Caki2 (cell line): ENCODE measurements at regions of chr6 and their contacts with region 1.

Region 1: DNA sequence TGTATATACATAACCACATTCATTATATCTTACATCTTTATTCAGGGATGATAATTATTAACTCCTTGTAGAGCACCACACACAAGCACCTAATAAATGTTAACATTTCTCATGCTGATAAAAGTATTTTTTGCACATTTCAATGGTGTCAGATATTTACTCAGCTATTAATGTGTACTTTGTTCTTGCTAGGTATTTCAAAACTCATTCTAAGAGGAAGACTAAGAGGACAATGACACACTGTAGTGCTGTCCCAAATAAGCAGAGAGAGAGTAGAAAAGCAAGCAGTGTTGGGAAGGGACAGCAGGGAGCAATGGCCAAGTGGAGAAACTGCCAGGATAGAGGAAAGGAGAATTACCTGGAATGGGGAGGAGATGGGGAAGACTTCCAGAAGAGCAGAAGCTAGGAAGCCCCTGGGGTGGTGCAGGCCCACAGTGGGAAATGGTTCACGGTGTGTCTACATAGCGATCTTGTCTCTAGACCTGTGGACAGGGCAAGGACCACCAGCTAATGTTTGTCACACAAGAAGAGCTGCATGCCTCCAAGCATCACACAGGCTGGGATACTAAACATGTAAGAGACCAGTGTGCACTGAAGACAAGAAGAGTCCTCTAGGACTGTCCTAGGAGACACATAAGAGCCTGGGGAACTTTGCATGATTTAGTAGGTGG is 55.3 kb downstream of the RARS2 start:
- DNase-seq: no peak

Region 2: DNA sequence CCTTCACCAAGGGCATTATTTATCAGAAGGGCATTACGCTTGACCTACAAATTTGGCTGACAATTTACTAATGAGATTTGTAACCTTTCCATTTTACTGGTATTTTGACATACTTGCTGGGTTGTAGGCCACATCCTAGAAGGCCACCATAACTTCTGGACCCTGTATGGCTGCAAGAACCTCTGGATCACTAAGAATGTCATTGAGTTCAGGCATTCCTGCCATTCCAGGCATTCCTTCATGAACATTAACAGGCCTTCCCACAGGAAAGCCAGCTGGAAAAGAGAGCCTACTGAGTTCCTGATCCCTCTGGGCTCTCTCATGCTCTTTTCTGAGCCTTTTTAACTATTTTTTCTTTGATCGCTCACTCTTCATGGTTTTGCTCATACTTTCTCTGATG is 90.2 kb before region 1 on chr6:
- in situ Hi-C with region 1: no loop called
- DNase-seq: no peak

Region 3: GRCh38 chr6:87487555-87487954 is 47.0 kb before region 1 on chr6:
- in situ Hi-C with region 1: loop called (anchors 5 kb)
- DNase-seq: no peak